PC-9 (cell line): ENCODE measurements at regions of chr12 and their contacts with region 1.

Region 1: DNA sequence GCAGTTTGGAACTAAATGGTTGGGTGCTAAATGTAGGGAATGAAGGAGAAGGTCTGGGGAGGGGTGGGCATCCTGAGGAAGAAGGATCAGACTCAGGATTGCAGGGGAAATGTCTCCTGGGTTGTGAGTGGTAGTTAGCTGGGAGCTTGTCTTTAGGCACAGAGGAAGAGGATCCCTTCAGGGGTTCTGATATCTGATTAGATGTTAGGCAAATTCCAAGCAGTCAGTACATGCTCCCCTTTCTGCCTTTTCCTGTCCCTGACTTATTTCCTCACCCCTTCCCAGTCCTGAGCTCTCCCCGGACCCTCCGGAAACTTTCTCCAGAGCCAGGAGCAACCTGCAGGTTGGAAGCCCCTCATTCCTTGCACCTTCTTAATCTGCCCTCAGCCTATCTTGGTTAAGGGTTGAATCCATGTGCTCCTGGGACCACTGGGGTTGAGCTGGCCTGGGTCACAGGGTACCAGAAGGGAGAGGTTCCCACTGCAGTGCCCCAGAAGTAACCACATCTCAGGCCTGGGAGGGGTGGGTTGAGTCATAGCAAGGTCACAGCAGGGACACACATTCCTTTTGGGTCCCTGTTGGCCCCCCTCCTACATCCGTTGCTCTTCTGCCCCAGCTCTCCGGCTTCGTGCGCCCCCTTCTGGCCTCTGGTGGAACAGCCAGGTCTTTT is 1.6 kb downstream of the IGFBP6 start:
- DNase-seq: peak; percentile 90 to 92
- H3K4me3 ChIP-seq: peak overlapping the region; percentile 96
- H3K27ac ChIP-seq: peak overlapping the region; percentile 87
- H3K4me1 ChIP-seq: peaks cover 22% of the 10 kb centered on the region
- H3K27me3 ChIP-seq: no peaks in the 10 kb centered on the region
- CTCF ChIP-seq: peak; percentile 95

Region 2: GRCh38 chr12:53031617-53032016 is 67.5 kb before region 1 on chr12:
- CTCF ChIA-PET with region 1: no interaction called
- POLR2A ChIA-PET with region 1: no interaction called
- intact Hi-C with region 1: no loop called
- DNase-seq: no peak
- H3K4me3 ChIP-seq: no peak overlapping the region
- H3K27ac ChIP-seq: no peak overlapping the region; the same call in 1 of the 2 replicates
- H3K4me1 ChIP-seq: no peaks in the 10 kb centered on the region
- H3K27me3 ChIP-seq: no peaks in the 10 kb centered on the region
- CTCF ChIP-seq: no peak

Region 3: GRCh38 chr12:53143355-53143754 is 44.2 kb after region 1 on chr12:
- CTCF ChIA-PET with region 1: no interaction called
- POLR2A ChIA-PET with region 1: interaction called, 20 read pairs
- intact Hi-C with region 1: no loop called
- DNase-seq: no peak
- H3K4me3 ChIP-seq: no peak overlapping the region
- H3K27ac ChIP-seq: no peak overlapping the region
- H3K4me1 ChIP-seq: no peaks in the 10 kb centered on the region
- H3K27me3 ChIP-seq: no peaks in the 10 kb centered on the region
- CTCF ChIP-seq: no peak

Region 4: GRCh38 chr12:53518381-53518780 is 419.3 kb after region 1 on chr12:
- CTCF ChIA-PET with region 1: no interaction called
- POLR2A ChIA-PET with region 1: no interaction called
- intact Hi-C with region 1: no loop called
- DNase-seq: no peak
- H3K4me3 ChIP-seq: no peak overlapping the region
- H3K27ac ChIP-seq: no peak overlapping the region
- H3K4me1 ChIP-seq: no peaks in the 10 kb centered on the region
- H3K27me3 ChIP-seq: no peaks in the 10 kb centered on the region
- CTCF ChIP-seq: no peak

Region 5: DNA sequence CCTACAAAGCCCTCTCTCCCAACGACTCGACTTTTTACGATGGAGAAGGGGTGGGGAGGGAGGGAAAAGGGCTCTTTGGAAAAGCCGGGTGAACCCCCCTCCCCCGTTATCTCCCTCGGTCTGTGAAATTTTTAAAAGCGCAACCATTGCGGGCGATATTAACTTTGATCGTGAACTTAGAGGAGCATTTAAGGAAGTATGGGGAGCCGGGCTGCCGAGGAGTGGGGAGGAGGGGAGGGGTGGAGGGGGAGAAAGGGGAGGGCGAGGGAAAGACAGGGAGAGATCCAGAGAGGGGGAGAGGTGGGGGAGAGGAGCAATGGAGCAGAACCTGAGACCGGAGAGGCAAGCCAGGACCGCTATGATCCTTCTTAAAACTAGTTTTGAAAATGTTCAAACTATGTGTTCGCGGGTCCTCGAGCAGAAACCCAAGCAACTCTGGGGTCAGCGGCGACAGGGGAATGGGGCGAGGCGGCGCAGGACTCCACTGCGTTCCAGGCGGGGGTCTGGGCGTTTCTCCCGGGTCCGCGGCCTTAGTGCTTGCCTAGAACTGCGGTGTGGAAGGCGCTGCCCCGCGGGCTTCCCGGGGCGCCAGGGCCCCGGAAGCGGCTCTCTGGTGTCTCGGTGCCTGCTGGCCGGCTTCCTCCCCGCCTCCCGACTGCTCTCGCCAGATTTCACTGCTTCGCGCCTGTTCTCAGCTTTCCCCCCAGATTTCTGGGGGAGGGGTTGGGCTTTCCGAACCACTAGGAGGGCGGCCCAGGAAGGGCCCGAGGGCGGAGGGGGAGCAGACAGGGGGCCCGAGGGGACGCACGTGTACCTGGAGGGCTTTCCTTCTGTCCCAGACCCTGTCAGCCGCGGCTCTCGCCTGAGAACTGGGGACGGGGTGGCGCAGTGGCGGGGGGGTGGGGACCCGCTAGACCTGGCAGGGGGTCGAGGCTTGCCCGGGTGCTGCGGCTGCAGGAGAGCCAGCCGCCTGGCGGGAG is 875.3 kb after region 1 on chr12 and contains the start of gene HOTAIR:
- CTCF ChIA-PET with region 1: no interaction called
- POLR2A ChIA-PET with region 1: interaction called, 24 read pairs
- intact Hi-C with region 1: no loop called
- DNase-seq: peak in 1 of 2 experiments; percentile 49
- H3K4me3 ChIP-seq: peak within 1 kb of the TSS; percentile 72
- H3K27ac ChIP-seq: peak within 1 kb of the TSS; percentile 49; the same call in 1 of the 2 replicates
- H3K4me1 ChIP-seq: no peaks in the 10 kb centered on the region
- H3K27me3 ChIP-seq: no peaks in the 10 kb centered on the region
- CTCF ChIP-seq: no peak
- total RNA-seq, gene HOTAIR: 7.9 and 9.2 TPM in 2 replicates